Activated CD4-positive, alpha-beta memory T cell treated with anti-CD3 and anti-CD28 coated beads, Interleukin-2, amount 10 ng/mL, durations not matched to agents 7 days and 5 days (primary cell): ENCODE measurements at regions of chr13 and their contacts with region 1.

Region 1: DNA sequence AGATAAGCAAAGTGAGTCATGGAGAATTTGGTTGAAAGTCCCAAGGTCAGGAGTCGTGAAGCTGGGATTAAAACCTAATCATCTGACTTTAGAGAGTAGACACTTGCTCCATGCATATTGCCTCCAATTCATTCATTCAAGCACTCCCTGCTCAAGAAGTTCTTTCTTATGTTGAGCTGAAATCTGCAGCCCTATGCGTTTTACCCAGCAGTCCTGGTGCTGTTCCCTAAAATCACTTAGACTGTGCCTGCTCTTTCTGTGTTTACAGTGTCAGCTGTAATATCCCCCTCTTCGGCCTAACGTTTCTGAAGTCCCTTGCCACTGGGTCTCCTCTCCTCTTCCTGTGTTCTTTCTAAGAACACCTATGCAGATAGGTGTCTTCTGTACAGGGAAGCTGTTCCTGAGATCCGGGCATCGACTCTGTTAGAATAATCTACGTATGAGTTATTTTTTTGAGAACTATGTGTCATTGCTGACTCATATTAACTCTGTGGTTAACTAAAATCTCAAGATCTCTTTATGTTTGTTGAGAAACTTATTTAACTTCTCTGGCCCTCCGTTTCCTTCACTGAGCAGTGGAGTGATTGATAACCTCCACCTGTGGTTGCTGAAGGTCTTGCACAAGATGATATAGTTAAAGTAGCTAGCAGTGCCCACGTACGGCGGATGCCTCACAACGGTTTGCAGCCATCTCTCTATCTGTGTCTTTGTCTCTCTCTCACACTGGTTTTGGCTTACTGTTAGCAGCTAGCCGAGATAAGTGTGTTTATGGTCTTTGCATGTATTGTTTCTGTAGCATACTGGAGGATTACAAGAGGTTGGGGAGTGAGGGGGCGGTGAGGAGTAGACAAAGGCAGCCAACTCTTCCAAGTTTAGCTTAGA is 4.7 kb downstream of the ALOX5AP start:
- DNase-seq: peak; percentile 79
- H3K4me3 Mint-ChIP-seq: peak overlapping the region; percentile 77
- H3K27ac Mint-ChIP-seq: peak overlapping the region; percentile 97
- H3K4me1 Mint-ChIP-seq: peaks cover 79% of the 10 kb centered on the region
- H3K27me3 Mint-ChIP-seq: no peaks in the 10 kb centered on the region

Region 2: DNA sequence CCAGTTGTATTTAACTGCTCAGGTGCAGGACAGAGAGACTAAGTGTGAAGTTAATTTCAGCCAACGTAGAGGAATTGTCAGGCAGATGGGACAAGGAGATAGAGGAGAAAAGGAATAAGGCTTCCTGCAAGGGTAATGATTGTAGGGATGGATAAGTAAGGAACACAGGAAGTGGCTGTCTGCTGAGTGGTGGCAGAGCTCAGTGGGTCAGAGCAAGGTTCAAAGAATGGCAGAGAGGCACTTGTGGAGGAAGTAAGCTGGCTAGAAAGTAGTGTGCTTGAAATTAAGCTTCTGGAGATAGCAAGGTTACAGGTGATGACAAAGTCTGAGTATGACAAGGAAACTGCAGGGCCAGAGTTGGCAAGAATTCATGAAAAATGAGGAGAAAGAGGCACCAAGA is 74.4 kb before region 1 on chr13:
- CTCF ChIA-PET with region 1: no interaction called
- POLR2A ChIA-PET with region 1: no interaction called
- DNase-seq: no peak
- H3K4me3 Mint-ChIP-seq: no peak overlapping the region
- H3K27ac Mint-ChIP-seq: no peak overlapping the region
- H3K4me1 Mint-ChIP-seq: peaks cover 10% of the 10 kb centered on the region
- H3K27me3 Mint-ChIP-seq: no peaks in the 10 kb centered on the region

Region 3: DNA sequence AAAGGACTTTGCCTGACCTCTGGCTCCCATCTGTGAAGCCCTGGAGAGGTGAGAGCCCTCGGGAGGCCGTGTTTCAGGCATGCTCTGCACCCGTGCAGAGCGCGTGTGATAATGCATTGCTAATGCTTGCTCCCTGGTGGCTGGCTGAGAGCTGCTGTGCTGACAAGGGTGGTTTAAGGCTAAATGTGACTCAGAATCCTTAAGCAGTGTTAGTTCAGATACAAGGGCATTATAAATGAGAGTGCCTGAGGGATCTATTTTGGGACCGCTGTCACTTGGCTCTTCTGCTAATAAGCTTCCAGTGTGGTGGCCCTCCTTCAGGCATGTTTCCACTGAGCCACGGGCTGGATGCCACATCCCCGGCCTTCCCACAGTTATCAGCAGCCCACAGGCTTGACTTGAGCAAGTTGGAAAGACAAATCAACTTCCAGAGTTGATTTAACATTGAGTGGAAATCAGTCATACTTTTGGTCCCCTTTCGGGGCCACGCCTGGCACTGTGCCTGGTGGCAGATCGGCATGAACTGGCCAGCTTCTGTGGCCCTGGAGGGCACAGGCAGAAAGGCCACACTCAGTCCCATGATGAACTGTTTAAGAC is 12.3 kb after region 1 on chr13:
- CTCF ChIA-PET with region 1: interaction called, 4 read pairs
- POLR2A ChIA-PET with region 1: interaction called, 18 read pairs
- DNase-seq: no peak
- H3K4me3 Mint-ChIP-seq: no peak overlapping the region
- H3K27ac Mint-ChIP-seq: no peak overlapping the region
- H3K4me1 Mint-ChIP-seq: peaks cover 32% of the 10 kb centered on the region
- H3K27me3 Mint-ChIP-seq: no peaks in the 10 kb centered on the region

Region 4: DNA sequence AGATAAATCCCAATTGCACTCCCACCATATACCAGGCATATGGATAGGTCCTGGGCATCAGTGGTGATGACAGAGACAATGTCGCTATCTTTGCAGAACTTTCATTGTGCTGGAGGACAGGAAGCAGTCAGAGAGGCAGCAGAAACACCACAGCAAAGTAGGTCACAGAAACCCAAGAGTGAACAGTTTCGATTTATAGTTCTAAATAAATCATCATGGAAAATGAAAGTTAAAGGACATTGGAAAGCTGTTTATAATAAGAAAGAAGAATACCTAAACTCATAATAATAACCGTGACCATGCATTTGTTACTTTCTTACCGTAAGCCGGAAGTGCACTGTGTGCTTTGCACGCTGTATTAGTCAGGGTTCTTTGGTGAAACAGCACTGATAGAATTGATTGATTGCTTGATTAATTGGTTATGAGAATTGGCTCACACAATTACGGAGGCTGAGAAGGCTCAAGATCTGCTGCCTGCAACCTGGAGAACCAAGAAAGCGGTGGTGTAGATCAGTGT is 34.3 kb after region 1 on chr13:
- CTCF ChIA-PET with region 1: no interaction called
- POLR2A ChIA-PET with region 1: interaction called, 37 read pairs
- DNase-seq: peak; percentile 54
- H3K4me3 Mint-ChIP-seq: peak overlapping the region; percentile 31
- H3K27ac Mint-ChIP-seq: peak overlapping the region; percentile 89
- H3K4me1 Mint-ChIP-seq: peaks cover 40% of the 10 kb centered on the region
- H3K27me3 Mint-ChIP-seq: peaks cover 6% of the 10 kb centered on the region